ENCODE measurements at regions of chr19 and their contacts with region 1.

Region 1: DNA sequence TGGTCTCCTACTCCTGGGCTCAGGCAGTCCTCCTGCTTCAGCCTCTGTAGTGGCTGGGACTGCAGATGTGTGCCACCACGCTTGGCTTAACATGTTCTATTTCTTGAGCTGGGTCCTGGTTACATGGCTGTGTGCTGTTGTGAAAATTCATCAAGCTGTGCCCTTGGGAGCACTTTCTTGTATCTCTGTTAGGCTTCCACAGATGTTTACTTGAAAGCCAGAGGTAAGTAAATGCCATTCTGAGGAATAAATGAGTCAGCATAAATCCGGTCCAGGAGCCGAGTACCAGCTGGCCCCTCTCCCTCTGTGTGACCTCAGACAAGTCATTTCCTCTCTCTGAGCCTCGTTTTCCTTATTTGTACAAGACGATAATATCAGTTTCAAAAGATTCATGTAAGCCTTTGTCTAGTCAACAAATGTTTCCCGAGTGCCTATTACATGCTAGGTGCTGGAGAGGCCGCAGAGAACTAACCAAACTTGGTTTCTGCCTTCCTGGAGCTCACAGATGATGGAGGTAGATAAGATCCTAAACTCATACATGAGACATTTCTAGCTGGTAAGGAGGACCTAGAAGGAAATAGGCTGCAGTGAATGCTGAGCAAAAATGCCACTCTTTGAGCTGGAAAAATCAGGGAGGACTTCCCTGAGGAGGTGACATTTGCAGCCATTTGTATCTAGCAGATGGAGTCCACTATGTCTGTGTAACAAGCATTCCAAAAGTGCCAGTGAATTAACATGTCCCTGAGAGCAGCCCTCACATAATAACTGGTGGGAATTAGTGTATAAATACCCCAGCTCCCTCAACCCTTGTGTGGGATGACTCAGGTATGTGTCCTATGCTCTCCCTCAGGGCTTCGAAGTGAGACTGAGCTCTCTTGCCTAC is 2.7 kb upstream of the RASAL3 start:
- DNase-seq: peak; percentile 48
- ATAC-seq: peak; percentile 51
- H3K4me3 Mint-ChIP-seq: peak overlapping the region; percentile 54
- H3K27ac Mint-ChIP-seq: peak overlapping the region; percentile 90
- H3K4me1 Mint-ChIP-seq: peaks cover 52% of the 10 kb centered on the region
- H3K27me3 Mint-ChIP-seq: peaks cover 5% of the 10 kb centered on the region

Region 2: DNA sequence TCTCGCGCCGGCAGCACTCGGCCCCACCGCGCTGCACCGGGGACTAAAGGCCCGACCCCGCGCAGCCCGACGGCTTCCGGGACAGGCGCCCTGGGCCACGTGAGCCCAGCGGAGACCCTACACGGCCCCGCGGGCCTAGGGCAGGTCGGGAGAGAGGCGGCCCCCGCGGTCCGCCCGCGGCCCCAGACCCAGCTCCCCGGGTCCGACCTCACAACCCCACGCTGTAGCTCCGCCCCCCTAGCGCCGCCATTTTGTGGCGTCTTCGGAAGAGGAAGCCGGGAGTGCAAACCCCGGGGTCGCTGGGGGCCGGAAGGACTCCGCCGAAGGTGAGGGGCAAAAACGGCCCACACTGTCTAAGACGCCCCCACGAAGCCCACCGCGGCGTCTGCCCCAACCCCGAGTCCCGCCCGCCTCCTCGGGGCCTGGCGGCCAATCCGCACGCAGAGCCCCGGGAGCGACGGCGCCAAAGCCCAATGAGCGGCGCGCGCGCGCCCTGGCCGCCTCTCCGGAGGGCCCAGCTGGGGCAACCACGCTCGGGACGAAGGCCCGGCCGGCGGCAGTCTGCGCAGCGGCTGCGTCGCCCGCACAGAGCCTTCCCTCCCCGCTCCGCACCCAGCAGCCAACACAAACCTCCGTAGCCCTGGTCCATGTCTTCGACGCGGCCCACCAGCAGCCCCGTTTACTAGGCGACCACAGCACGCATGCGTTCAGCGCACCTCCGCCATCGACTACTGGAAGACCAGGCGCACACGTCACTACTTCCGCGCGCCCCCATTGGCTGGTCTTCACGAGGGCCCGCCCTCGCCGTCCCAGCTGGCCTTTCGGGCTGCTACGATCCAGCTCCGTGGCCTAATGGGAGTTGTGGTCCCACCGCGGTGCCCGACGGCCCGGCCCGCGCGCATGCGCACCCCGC is 87.8 kb before region 1 on chr19 and contains the start of gene AKAP8:
- POLR2A ChIA-PET with region 1: interaction called, 16 read pairs
- DNase-seq: peak; percentile 98
- ATAC-seq: peak; percentile 88
- H3K4me3 Mint-ChIP-seq: peak within 1 kb of the TSS; percentile 98
- H3K27ac Mint-ChIP-seq: peak within 1 kb of the TSS; percentile 100
- H3K4me1 Mint-ChIP-seq: peaks cover 22% of the 10 kb centered on the region
- H3K27me3 Mint-ChIP-seq: no peaks in the 10 kb centered on the region
- total RNA-seq, gene AKAP8: 57.4 to 59.1 TPM

Region 3: DNA sequence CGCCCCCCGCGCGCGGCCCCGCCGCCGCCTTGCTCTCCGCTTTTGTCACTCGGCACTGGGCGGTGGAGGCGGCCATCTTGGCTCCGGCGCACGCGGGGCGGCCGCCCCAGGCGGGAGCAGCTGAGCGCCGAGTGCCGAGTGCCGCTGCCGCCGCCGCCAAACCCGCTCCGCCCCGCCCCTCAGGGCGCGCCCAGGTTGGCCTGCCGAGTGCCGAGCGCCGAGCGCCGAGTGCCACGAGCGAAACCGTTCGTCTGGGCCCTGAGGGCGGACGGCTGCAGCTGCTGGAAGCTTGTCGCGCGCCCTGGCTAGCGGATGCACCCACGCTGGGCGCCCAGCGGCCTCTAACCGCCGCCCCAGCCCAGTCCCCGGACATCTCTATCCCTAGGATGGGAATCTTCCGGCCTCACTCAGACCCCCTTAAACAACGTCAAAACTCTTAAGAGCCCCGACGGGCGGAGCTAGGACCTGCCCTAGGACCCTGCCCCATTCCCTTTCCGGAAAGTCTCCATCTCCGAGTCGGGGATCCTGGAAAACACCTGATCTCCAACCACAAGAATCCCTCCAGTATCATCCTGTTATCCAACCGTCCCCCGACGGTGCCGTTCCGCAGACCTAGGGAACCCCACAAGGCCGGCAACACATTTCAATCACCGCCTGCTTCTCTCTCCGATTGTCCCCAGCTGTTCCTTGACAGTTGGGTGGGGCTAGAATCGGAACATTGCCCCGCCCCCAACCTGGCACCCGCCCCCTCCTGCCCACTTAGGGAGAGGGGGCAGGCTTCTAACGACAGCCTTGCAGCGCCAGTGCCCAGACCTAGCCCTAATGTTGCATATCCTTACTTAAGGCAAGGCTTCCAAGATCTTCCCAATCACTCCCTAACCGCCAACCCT is 34.2 kb before region 1 on chr19:
- POLR2A ChIA-PET with region 1: interaction called, 22 read pairs
- DNase-seq: peak; percentile 98
- ATAC-seq: peak; percentile 76
- H3K4me3 Mint-ChIP-seq: peak overlapping the region; percentile 93
- H3K27ac Mint-ChIP-seq: peak overlapping the region; percentile 96
- H3K4me1 Mint-ChIP-seq: peaks cover 22% of the 10 kb centered on the region
- H3K27me3 Mint-ChIP-seq: no peaks in the 10 kb centered on the region

Region 4: DNA sequence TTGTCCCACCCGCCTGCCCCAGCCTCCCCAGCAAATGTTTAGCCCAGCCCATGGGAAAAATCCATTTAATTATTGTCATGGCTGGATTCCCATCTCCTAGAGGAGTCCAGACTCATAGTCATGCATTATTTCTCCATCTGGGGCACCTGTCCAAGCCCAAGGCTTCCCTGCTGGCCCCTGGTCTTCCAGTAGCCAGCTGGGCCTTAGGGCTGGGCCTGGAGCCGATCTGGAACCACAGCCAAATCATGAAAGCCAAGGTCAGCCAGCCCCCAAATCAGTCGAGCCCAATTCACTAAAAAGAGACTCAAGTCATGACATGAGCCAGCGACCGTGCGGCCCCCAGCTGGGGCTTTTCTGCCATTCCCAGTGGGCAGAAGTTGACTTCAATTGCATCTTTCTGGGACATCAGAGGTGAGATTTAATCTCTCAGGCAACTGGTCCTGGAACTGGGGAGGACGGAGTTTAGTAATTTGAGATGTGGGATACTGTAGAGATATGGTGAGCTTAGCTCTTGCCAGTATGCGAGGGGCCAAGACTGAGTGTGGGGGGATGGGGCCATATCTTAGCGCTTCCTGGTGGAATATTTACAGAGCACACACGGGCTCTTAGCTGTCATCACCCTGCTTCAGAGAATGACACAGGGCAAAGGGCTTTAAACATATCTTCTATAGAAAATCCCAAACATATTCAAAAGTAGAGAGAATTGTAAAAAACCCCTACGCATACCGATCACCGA is 21.6 kb after region 1 on chr19:
- POLR2A ChIA-PET with region 1: no interaction called
- DNase-seq: no peak
- ATAC-seq: no peak
- H3K4me3 Mint-ChIP-seq: no peak overlapping the region
- H3K27ac Mint-ChIP-seq: no peak overlapping the region
- H3K4me1 Mint-ChIP-seq: peaks cover 4% of the 10 kb centered on the region
- H3K27me3 Mint-ChIP-seq: peaks cover 5% of the 10 kb centered on the region

Region 5: GRCh38 chr19:15506074-15506571 is 39.0 kb after region 1 on chr19:
- POLR2A ChIA-PET with region 1: interaction called, 11 read pairs
- DNase-seq: no peak
- ATAC-seq: no peak
- H3K4me3 Mint-ChIP-seq: no peak overlapping the region
- H3K27ac Mint-ChIP-seq: no peak overlapping the region
- H3K4me1 Mint-ChIP-seq: peaks cover 23% of the 10 kb centered on the region
- H3K27me3 Mint-ChIP-seq: peaks cover 28% of the 10 kb centered on the region

Region 6: DNA sequence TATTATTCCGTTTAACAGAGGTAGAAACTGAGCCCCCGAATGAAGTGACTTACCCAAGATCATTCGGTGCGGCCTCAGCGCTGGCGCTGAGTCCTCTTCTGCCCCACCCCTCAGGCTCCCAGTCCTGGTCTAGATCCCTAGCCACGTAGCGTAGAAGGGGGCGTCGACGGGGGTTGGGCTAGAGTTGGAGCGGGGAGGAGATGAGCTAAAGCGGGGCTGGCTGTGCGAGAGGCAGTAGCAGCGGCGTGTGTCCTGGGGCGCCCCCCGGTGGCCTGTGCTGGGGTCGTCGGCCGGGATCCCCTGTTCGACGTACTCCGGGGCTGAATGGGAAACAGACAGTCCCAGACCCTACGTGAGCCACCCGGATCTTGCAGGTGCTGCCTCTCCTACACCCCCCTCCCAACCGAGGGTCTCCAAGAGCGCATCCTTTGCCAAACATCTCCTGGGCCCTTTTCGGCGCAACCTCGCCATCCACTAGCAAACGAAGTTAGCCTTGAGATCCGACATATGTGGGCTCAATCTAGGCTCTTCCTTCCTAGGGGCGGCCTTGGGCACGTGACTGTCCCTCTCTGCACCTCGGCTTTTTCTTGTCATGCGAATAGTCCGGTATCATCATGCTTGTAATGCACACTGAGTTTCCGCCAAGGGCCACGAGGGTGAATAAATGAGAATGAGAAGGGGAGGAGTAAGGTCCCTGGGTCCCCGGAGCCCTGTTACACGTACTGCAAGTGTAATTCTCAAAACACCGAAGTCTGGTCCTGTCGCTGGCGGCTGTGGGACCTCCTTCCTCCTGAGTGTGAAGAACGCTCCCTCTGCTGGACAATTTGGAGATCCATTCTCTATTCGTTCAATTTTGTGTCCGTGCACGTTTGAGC is 88.9 kb after region 1 on chr19:
- POLR2A ChIA-PET with region 1: interaction called, 23 read pairs
- DNase-seq: peak; percentile 99
- ATAC-seq: peak; percentile 84
- H3K4me3 Mint-ChIP-seq: peak overlapping the region; percentile 92
- H3K27ac Mint-ChIP-seq: peak overlapping the region; percentile 86
- H3K4me1 Mint-ChIP-seq: peaks cover 18% of the 10 kb centered on the region
- H3K27me3 Mint-ChIP-seq: peaks cover 3% of the 10 kb centered on the region

Region 7: GRCh38 chr19:15652559-15653278 is 185.6 kb after region 1 on chr19:
- POLR2A ChIA-PET with region 1: no interaction called
- DNase-seq: no peak
- ATAC-seq: no peak
- H3K4me3 Mint-ChIP-seq: no peak overlapping the region
- H3K27ac Mint-ChIP-seq: no peak overlapping the region
- H3K4me1 Mint-ChIP-seq: no peaks in the 10 kb centered on the region
- H3K27me3 Mint-ChIP-seq: peaks cover 16% of the 10 kb centered on the region